ENCODE measurements at regions of chr12 and their contacts with region 1.

Region 1: GRCh38 chr12:12813120-12814101 is at the start of gene DDX47:
- DNase-seq: peak; percentile 93 to 97 (median 95)
- H3K4me3 ChIP-seq: peak within 1 kb of the TSS; percentile 87 to 92
- H3K4me3 Mint-ChIP-seq: peak within 1 kb of the TSS; percentile 89 to 98 (median 98)
- H3K27ac ChIP-seq: peak within 1 kb of the TSS; percentile 95
- H3K27ac Mint-ChIP-seq: peak within 1 kb of the TSS; percentile 88 to 99 (median 98)
- H3K4me1 ChIP-seq: peaks cover 53% of the 10 kb centered on the region
- H3K4me1 Mint-ChIP-seq: peaks cover 41 to 76% (median 58%) of the 10 kb centered on the region in 4 donors
- H3K27me3 ChIP-seq: no peaks in the 10 kb centered on the region
- H3K27me3 Mint-ChIP-seq: no peaks in the 10 kb centered on the region
- total RNA-seq, gene DDX47: 66.5 to 66.6 TPM

Region 2: DNA sequence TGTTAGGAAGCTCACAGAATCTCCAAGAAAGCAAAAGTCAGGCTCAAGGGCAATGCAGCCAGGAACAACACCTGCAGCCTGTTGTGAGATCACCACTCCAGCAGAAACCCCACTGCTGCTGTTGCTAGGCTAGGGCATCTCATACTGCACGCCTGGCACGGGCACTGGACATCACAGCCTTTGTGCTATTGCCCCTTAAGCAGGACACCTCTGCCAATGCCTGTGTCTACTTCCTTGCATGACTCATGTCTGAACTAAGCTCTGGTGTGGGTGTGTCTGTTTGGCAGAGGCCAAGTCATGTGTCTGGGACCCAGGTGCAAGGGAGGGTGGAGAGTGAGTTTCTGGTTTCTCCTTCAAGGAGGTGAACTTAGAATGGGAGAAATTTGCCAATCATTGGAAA is 10.2 kb before region 1 on chr12:
- CTCF ChIA-PET with region 1: interaction called, 21 read pairs
- POLR2A ChIA-PET with region 1: interaction called, 7 read pairs
- intact Hi-C with region 1: no loop called
- DNase-seq: peak; percentile 3 to 74 (median 15)
- H3K4me3 ChIP-seq: no peak overlapping the region
- H3K4me3 Mint-ChIP-seq: peak overlapping the region in 6 of 8 donors; percentile 11 to 72 (median 32)
- H3K27ac ChIP-seq: no peak overlapping the region
- H3K27ac Mint-ChIP-seq: peak overlapping the region; percentile 57 to 97 (median 87)
- H3K4me1 ChIP-seq: peaks cover 42% of the 10 kb centered on the region
- H3K4me1 Mint-ChIP-seq: peaks cover 23 to 59% (median 44%) of the 10 kb centered on the region in 4 donors
- H3K27me3 ChIP-seq: no peaks in the 10 kb centered on the region
- H3K27me3 Mint-ChIP-seq: no peaks in the 10 kb centered on the region

Region 3: GRCh38 chr12:12999959-13000615 is 186.7 kb after region 1 on chr12 and contains the start of gene HEBP1:
- CTCF ChIA-PET with region 1: no interaction called
- POLR2A ChIA-PET with region 1: interaction called, 4 read pairs
- intact Hi-C with region 1: loop called (anchors 1 kb)
- DNase-seq: peak; percentile 92 to 95 (median 93)
- H3K4me3 ChIP-seq: peak within 1 kb of the TSS; percentile 61 to 81
- H3K4me3 Mint-ChIP-seq: peak within 1 kb of the TSS; percentile 82 to 97 (median 90)
- H3K27ac ChIP-seq: peak within 1 kb of the TSS; percentile 64
- H3K27ac Mint-ChIP-seq: peak within 1 kb of the TSS; percentile 82 to 95 (median 90)
- H3K4me1 ChIP-seq: peaks cover 26% of the 10 kb centered on the region
- H3K4me1 Mint-ChIP-seq: peaks cover 20 to 44% (median 30%) of the 10 kb centered on the region in 4 donors
- H3K27me3 ChIP-seq: no peaks in the 10 kb centered on the region
- H3K27me3 Mint-ChIP-seq: no peaks in the 10 kb centered on the region
- total RNA-seq, gene HEBP1: 11.3 to 13.9 TPM

Measured in CD4-positive, alpha-beta memory T cell (primary cell).